ENCODE measurements at regions of chr1 and their contacts with region 1.

Region 1: DNA sequence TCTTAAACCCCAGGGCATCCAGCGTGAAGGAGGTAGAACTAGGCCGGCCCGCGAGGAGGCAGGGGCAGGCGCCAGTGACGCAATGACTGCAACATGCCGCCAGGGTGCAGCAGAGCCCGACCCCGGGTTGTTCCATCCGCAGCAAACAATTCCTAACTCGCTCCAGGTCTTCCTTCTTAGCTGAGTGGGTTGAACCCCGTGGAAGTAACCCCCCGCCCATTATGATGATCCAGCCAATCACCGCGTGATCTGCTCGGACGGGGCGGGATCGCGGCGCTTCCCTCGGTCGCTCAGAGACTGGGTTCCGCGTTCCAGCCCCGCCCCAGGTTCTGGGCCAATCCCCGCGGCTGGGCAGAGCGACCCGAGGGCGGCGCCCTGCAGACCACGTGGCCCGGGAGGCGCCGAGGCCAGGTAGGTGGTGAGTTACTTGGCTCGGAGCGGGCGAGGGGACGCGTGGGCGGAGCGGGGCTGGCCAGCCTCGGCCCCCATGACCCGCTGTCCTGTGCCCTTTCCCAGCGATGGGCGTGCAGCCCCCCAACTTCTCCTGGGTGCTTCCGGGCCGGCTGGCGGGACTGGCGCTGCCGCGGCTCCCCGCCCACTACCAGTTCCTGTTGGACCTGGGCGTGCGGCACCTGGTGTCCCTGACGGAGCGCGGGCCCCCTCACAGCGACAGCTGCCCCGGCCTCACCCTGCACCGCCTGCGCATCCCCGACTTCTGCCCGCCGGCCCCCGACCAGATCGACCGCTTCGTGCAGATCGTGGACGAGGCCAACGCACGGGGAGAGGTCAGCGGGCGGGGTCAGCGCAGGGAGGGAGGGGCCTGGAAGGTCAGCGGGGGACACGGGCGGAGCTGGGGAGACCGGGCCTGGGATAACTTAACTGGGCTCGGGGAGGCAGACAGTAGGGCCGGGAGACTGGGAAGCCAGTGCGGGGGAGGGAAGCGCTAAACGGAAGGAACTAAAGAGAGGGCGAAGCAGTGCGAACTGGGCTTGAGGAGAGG is at the start of gene DUSP23:
- DNase-seq: peak; percentile 98
- ATAC-seq: peak; percentile 99
- H3K4me3 ChIP-seq: peak within 1 kb of the TSS; percentile 60 to 96 (median 78)
- H3K27ac ChIP-seq: peak within 1 kb of the TSS; percentile 71 to 91 (median 78)
- H3K4me1 ChIP-seq: peaks cover 0 to 25% (median 11%) of the 10 kb centered on the region in 12 donors
- H3K27me3 ChIP-seq: no peaks in the 10 kb centered on the region
- CTCF ChIP-seq: peak; percentile 87 to 98 (median 93)
- POLR2A ChIP-seq: peak in 1 of 2 donors; percentile 70
- total RNA-seq, gene DUSP23: 10.0 to 30.3 (median 18.8) TPM

Region 2: DNA sequence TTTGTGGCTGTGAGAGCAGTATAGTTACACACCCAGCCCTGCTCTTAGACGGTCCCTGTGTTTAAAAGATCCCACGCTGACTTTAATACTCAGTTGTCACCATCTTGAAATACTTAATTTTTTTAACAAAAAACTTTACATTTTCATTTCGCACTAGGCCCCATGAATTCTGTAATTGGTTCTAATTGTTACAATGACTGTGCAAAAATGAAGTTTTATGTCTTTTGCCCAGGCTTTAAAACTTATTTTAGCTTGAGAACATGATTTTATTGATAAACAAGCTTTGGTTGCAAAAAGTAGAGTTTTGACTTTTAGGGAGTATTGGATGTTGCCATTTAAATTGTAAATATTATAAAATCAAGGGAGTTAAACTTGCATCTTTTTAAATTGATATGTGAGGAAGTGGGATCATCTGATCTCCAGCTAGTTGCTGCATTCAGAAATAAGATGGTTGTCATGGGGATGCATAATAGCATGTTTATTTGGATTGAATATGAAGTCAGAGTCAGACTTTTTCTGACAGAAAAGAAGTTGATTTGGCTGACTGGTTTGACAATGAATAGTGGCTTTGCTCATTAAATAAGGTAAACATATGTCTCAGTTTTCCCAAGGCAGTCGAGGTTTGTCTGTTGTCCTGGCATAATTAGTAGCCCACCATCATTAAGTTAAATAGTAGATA is 43.5 kb before region 1 on chr1:
- intact Hi-C with region 1: no loop called
- DNase-seq: no peak
- ATAC-seq: no peak
- H3K4me3 ChIP-seq: no peak overlapping the region
- H3K27ac ChIP-seq: no peak overlapping the region
- H3K4me1 ChIP-seq: no peaks in the 10 kb centered on the region
- H3K27me3 ChIP-seq: no peaks in the 10 kb centered on the region
- CTCF ChIP-seq: no peak
- POLR2A ChIP-seq: no peak

Region 3: DNA sequence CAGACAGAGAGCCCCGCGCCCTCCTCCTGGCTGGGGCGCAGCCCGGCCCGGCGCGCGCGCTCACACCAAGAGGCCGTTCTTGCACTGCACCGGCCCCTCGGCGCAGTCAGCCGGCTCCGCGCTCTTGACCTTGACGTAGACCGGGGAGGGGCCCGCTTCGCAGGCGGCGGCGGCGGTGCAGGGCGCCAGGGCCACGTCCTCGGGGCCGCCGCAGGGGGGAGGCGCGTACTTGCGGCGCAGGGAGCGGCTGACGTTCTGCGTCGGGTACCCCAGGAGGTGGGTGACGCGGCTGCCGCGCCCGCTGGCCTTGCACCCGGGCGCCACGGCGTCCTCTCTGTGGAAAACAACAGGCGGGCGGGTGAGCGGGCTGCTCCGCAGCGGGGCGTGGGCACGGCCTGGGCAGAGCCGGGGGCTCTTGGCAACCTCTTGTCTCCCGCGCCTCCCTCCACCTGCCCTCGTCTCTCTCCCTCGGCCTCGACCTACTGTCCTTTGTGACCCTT is 73.9 kb after region 1 on chr1:
- intact Hi-C with region 1: loop called in 1 of 10 experiments (anchors 2 kb)
- DNase-seq: peak; percentile 90 to 95 (median 92)
- ATAC-seq: peak; percentile 82 to 98 (median 94)
- H3K4me3 ChIP-seq: peak overlapping the region; percentile 68 to 96 (median 78)
- H3K27ac ChIP-seq: peak overlapping the region; percentile 90 to 99 (median 98)
- H3K4me1 ChIP-seq: peaks cover 0 to 24% (median 11%) of the 10 kb centered on the region in 12 donors
- H3K27me3 ChIP-seq: no peaks in the 10 kb centered on the region
- CTCF ChIP-seq: peak in 4 of 12 donors; percentile 13 to 36 (median 30)
- POLR2A ChIP-seq: peak in 1 of 2 donors; percentile 87

Region 4: GRCh38 chr1:159881930-159882839 is 101.3 kb after region 1 on chr1:
- intact Hi-C with region 1: no loop called
- DNase-seq: peak in 4 of 5 donors; percentile 44 to 82 (median 56)
- ATAC-seq: peak in 3 of 4 donors; percentile 34 to 60 (median 49)
- H3K4me3 ChIP-seq: no peak overlapping the region
- H3K27ac ChIP-seq: no peak overlapping the region
- H3K4me1 ChIP-seq: peaks cover 0 to 36% (median 0%) of the 10 kb centered on the region in 12 donors
- H3K27me3 ChIP-seq: no peaks in the 10 kb centered on the region
- CTCF ChIP-seq: no peak
- POLR2A ChIP-seq: no peak

Region 5: DNA sequence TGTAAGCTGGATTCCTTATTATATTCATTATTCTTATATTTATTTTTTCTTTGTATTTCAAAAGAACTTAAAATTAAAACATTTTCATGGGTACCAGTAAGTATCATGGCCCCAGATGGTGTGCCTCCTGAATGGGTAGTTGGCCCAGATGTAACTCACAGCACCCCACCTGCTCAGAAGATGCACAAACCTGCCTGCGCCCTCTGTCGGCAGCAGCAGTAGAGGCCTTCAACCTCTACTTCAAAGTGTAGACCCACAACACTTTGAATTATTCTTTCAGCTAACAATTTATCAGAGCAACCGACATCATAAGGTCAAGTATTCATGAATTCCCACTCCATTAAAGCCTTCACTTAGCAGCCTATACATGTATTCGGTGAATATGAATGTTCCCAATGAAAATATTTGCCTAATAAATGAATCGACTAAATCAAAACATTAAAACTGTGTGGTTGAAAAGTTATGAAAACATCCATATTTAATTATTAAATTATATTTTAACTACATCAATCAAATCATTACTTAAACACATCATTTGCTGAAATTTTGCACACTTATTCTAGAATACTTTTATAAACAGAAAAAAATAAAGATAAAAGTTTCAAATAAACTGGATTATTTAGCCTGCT is 225.5 kb after region 1 on chr1:
- intact Hi-C with region 1: loop called in 1 of 10 experiments (anchors 10 kb)
- DNase-seq: peak; percentile 35 to 80 (median 70)
- ATAC-seq: peak in 3 of 4 donors; percentile 62 to 74 (median 64)
- H3K4me3 ChIP-seq: no peak overlapping the region
- H3K27ac ChIP-seq: no peak overlapping the region
- H3K4me1 ChIP-seq: no peaks in the 10 kb centered on the region
- H3K27me3 ChIP-seq: peaks cover 0 to 2% (median 0%) of the 10 kb centered on the region in 9 donors
- CTCF ChIP-seq: peak; percentile 62 to 88 (median 74)
- POLR2A ChIP-seq: no peak

Region 6: GRCh38 chr1:160031365-160032164 is 250.7 kb after region 1 on chr1 and contains the start of gene PIGM:
- intact Hi-C with region 1: loop called in 4 of 10 experiments (anchors 1 to 5 kb)
- DNase-seq: peak; percentile 93 to 96 (median 95)
- ATAC-seq: peak; percentile 90 to 97 (median 97)
- H3K4me3 ChIP-seq: peak within 1 kb of the TSS; percentile 63 to 93 (median 78)
- H3K27ac ChIP-seq: peak within 1 kb of the TSS in 11 of 12 donors; percentile 37 to 85 (median 69)
- H3K4me1 ChIP-seq: peaks cover 0 to 39% (median 18%) of the 10 kb centered on the region in 12 donors
- H3K27me3 ChIP-seq: no peaks in the 10 kb centered on the region
- CTCF ChIP-seq: no peak
- POLR2A ChIP-seq: peak in 1 of 2 donors; percentile 61
- total RNA-seq, gene PIGM: 1.7 to 4.1 (median 2.5) TPM